Heart left ventricle (tissue), 16 donors: ENCODE measurements at regions of chr1 and their contacts with region 1.

Region 1: GRCh38 chr1:157948312-157949073 is 45.0 kb upstream of the KIRREL1 start:
- DNase-seq: peak in 3 of 5 donors; percentile 17 to 31 (median 29)
- ATAC-seq: peak in 3 of 4 donors; percentile 73 to 87 (median 82)
- H3K4me3 ChIP-seq: no peak overlapping the region
- H3K27ac ChIP-seq: no peak overlapping the region
- H3K4me1 ChIP-seq: peaks cover 0 to 40% (median 0%) of the 10 kb centered on the region in 12 donors
- H3K27me3 ChIP-seq: peaks cover 0 to 17% (median 0%) of the 10 kb centered on the region in 9 donors
- CTCF ChIP-seq: peak; percentile 19 to 67 (median 60)
- POLR2A ChIP-seq: no peak

Region 2: GRCh38 chr1:157090196-157090647 is 858.3 kb before region 1 on chr1:
- intact Hi-C with region 1: no loop called
- DNase-seq: peak; percentile 84 to 93 (median 87)
- ATAC-seq: peak; percentile 74 to 90 (median 86)
- H3K4me3 ChIP-seq: no peak overlapping the region
- H3K27ac ChIP-seq: peak overlapping the region in 2 of 12 donors; percentile 14 to 24
- H3K4me1 ChIP-seq: peaks cover 0 to 21% (median 5%) of the 10 kb centered on the region in 12 donors
- H3K27me3 ChIP-seq: no peaks in the 10 kb centered on the region
- CTCF ChIP-seq: peak; percentile 90 to 98 (median 96)
- POLR2A ChIP-seq: no peak

Region 3: DNA sequence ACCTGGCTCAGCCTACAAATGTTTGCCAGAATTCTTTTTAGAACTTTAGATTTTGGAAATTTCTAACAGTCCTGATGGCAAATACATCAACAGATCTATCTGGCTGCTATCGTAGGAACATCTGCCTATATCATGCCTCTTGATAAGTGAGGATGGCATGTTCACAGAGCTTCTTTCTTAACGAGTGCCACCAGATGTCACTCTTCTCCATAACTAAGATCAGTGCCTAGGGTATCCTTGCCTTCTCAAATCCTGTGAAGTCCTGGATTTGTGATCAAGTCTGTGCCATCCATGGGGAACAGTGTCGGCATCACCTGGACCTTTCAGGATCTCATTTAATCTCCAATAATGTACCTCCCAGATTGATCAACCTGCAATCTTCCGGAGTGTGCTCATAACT is 70.4 kb before region 1 on chr1:
- intact Hi-C with region 1: loop called (anchors 1 to 5 kb)
- DNase-seq: no peak
- ATAC-seq: peak in 2 of 4 donors; percentile 44 to 68
- H3K4me3 ChIP-seq: no peak overlapping the region
- H3K27ac ChIP-seq: no peak overlapping the region
- H3K4me1 ChIP-seq: peaks cover 0 to 15% (median 0%) of the 10 kb centered on the region in 12 donors
- H3K27me3 ChIP-seq: peaks cover 0 to 7% (median 0%) of the 10 kb centered on the region in 9 donors
- CTCF ChIP-seq: peak in 10 of 12 donors; percentile 33 to 56 (median 44)
- POLR2A ChIP-seq: no peak

Region 4: GRCh38 chr1:158035976-158036583 is 87.6 kb after region 1 on chr1:
- intact Hi-C with region 1: no loop called
- DNase-seq: peak in 2 of 5 donors; percentile 35 to 51
- ATAC-seq: peak in 2 of 4 donors; percentile 40 to 52
- H3K4me3 ChIP-seq: no peak overlapping the region
- H3K27ac ChIP-seq: no peak overlapping the region
- H3K4me1 ChIP-seq: peaks cover 0 to 47% (median 18%) of the 10 kb centered on the region in 12 donors
- H3K27me3 ChIP-seq: no peaks in the 10 kb centered on the region
- CTCF ChIP-seq: peak; percentile 63 to 83 (median 76)
- POLR2A ChIP-seq: no peak

Region 5: GRCh38 chr1:158422212-158422611 is 473.7 kb after region 1 on chr1:
- intact Hi-C with region 1: no loop called
- DNase-seq: no peak
- ATAC-seq: no peak
- H3K4me3 ChIP-seq: no peak overlapping the region
- H3K27ac ChIP-seq: no peak overlapping the region
- H3K4me1 ChIP-seq: no peaks in the 10 kb centered on the region
- H3K27me3 ChIP-seq: no peaks in the 10 kb centered on the region
- CTCF ChIP-seq: no peak
- POLR2A ChIP-seq: no peak